Heart right ventricle (tissue), 16 donors: ENCODE measurements at regions of chr2 and their contacts with region 1.

Region 1: DNA sequence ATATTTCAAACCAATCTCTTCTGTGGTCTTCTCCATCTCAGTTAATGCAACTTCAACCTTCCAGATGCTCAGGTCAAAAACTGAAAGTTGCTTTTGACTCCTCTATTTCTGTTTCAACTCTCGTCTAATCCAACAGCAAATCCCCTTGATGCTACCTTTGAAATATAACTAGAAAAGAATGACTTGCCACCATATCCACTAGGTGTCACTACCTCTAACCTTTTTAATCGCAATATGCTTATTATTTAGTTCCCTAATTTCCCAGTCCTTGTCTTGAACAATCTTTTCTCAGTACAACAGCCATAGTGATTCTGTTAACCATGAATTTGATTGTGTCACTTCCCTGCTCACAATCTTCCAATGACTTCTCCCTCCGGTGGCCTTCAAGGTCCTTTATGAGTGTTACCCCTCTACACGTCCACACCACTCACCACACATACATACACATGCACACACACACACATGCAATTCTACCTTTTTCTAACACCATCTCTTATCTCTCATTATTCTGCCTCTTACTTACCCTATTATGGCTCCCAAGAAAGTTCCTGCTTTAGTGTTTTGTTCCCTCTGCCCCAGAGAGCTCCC is 245.5 kb upstream of the KCNJ3 start:
- DNase-seq: no peak
- ATAC-seq: no peak
- H3K4me3 ChIP-seq: no peak overlapping the region
- H3K27ac ChIP-seq: no peak overlapping the region
- H3K4me1 ChIP-seq: peaks cover 0 to 14% (median 0%) of the 10 kb centered on the region in 9 donors
- H3K27me3 ChIP-seq: no peaks in the 10 kb centered on the region
- CTCF ChIP-seq: peak in 8 of 9 donors; percentile 29 to 67 (median 58)

Region 2: DNA sequence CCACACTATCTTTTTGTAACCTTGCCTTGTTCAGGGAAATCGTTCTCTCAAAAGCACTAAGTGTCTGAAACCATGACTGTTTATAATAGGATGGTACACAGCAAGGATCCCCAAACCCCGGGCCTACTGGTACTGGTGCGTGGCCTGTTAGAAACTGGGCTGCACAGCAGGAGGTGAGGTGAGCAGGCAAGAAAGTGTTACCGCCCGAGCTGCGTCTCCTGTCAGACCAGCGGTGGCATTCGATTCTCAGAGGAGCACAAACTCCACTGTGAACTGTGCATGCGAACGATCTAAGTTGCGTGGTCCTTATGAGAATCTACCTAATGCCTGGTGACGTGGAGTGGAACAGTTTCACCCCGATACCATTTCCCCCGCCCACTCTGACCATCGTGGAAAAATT is 163.7 kb after region 1 on chr2:
- intact Hi-C with region 1: loop called in 4 of 10 experiments (anchors 10 kb)
- DNase-seq: no peak
- ATAC-seq: no peak
- H3K4me3 ChIP-seq: no peak overlapping the region
- H3K27ac ChIP-seq: no peak overlapping the region
- H3K4me1 ChIP-seq: no peaks in the 10 kb centered on the region
- H3K27me3 ChIP-seq: no peaks in the 10 kb centered on the region
- CTCF ChIP-seq: no peak

Region 3: DNA sequence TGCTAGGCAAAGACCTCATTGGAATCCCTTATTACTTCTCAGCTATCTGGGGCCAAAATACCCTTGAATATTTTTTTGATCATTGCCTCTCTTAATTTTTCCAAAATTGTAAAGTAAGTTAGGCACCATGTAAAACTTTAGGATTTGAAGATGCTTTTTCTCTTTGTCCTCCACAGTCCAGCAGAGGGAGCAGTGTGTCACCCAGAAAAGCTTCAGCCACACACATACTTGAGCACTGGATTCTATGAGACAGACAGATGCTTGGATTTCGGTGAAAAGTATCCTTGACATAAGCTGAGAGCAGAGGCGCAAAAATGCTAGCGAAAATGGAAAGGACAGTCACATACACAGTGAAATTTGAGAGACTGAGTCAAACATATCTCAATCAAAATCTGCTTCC is 170.8 kb after region 1 on chr2:
- intact Hi-C with region 1: loop called in 4 of 10 experiments (anchors 10 kb)
- DNase-seq: peak in 1 of 2 donors; percentile 20
- ATAC-seq: peak in 2 of 8 donors; percentile 46 to 56
- H3K4me3 ChIP-seq: no peak overlapping the region
- H3K27ac ChIP-seq: no peak overlapping the region
- H3K4me1 ChIP-seq: peaks cover 0 to 5% (median 0%) of the 10 kb centered on the region in 9 donors
- H3K27me3 ChIP-seq: no peaks in the 10 kb centered on the region
- CTCF ChIP-seq: peak; percentile 38 to 77 (median 61)

Region 4: GRCh38 chr2:154637456-154637855 is 184.5 kb after region 1 on chr2:
- intact Hi-C with region 1: loop called in 1 of 10 experiments (anchors 5 kb)
- DNase-seq: no peak
- ATAC-seq: no peak
- H3K4me3 ChIP-seq: no peak overlapping the region
- H3K27ac ChIP-seq: no peak overlapping the region
- H3K4me1 ChIP-seq: no peaks in the 10 kb centered on the region
- H3K27me3 ChIP-seq: no peaks in the 10 kb centered on the region
- CTCF ChIP-seq: no peak

Region 5: GRCh38 chr2:155223781-155224406 is 770.9 kb after region 1 on chr2:
- intact Hi-C with region 1: loop called in 6 of 10 experiments (anchors 5 to 10 kb)
- DNase-seq: no peak
- ATAC-seq: no peak
- H3K4me3 ChIP-seq: no peak overlapping the region
- H3K27ac ChIP-seq: no peak overlapping the region
- H3K4me1 ChIP-seq: no peaks in the 10 kb centered on the region
- H3K27me3 ChIP-seq: no peaks in the 10 kb centered on the region
- CTCF ChIP-seq: peak; percentile 25 to 69 (median 41)